GM10248 (cell line): ENCODE measurements at regions of chr16 and their contacts with region 1.

Region 1: DNA sequence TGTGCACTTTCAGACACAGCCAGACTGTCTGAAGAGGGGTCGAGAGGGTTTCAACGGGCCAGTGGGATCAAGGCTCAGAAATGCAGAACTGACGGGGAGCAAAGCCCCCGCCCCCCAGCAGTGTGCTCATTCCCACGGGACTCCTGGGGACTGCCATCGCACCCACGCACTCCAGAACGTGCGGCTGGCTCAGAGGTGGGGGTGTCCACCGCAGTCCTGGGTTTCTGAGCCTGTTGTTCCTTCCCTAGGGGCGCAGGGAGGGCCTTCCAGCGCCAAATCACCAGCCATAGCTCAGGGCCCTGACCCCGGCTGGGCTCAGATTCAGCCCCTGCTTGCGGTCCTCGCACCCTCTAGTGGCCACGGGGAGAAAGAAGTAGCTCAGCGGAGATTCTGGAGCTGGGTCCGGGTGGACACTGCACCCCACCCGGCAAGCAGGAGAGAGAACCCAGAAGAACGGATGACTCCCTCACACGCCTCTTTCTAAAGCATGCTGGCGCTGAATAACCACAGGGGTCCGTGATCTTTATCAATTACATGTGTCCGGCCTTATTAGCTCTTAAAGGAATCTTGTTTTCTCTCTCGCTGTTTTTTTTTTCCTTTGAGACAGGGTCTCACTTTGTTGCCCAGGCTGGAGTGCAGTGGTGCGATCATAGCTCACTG is 45.0 kb upstream of the USP7 start:
- DNase-seq: peak; percentile 90
- CTCF ChIP-seq: peak; percentile 87

Region 2: DNA sequence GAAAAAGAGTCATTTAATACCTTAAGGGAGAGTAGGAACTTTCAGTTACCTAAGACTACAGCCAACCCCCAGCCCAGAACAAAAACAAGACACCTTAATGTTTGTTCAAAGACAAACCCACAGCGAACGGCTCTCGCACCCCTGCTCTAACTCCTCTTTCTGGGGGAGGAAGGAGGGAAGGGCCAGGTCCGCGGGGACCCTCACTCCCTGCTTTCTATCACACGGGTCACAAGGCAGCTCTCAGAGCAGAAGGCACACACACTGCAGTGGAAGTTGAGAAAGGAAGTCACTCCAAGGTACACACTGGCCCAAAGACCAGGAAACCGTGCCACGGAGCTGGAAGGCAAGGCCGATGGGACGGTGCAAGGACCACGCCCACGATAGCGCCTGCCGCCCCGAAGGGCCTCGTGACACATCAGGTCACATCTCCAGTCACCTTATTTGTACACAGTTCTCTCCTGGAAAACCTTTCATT is 116.6 kb before region 1 on chr16:
- CTCF ChIA-PET with region 1: interaction called, 30 read pairs
- POLR2A ChIA-PET with region 1: no interaction called
- DNase-seq: peak; percentile 45
- CTCF ChIP-seq: no peak

Region 3: GRCh38 chr16:8943966-8944759 is 64.6 kb before region 1 on chr16:
- CTCF ChIA-PET with region 1: interaction called, 11 read pairs
- POLR2A ChIA-PET with region 1: no interaction called
- DNase-seq: peak; percentile 71
- CTCF ChIP-seq: no peak

Region 4: GRCh38 chr16:8989099-8989878 is 19.4 kb before region 1 on chr16:
- CTCF ChIA-PET with region 1: interaction called, 43 read pairs
- POLR2A ChIA-PET with region 1: no interaction called
- DNase-seq: no peak
- CTCF ChIP-seq: no peak

Region 5: DNA sequence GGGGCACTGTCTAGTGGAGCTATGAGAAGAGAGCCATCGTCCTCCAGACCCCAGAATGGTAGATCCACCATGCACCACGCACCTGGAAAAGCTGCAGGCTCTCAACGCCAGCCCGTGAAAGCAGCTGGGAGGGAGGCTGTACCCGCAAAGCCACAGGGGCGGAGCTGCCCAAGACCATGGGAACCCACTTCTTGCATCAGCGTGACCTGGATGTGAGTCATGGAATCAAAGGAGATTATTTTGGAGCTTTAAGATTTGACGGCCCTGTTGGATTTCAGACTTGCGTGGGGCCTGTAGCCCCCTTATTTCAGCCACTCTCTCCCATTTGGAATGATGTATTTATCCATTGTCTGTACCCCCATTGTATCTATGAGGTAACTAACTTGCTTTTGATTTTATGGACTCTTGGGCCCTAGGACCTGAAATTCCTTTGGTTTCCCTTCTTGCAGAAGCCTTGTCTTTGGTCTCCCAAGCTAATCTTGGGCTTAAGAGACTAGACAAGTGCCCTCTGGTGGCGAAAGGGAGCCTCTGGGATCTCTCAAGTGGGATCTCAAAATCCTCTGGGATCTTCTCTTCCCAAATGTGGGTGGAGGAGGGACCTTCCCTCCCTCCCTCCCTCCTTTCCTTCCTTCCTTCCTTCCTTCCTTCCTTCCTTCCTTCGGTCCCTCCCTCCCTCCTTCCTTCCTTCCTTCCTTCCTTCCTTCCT is 24.5 kb after region 1 on chr16:
- CTCF ChIA-PET with region 1: interaction called, 18 read pairs
- POLR2A ChIA-PET with region 1: no interaction called
- DNase-seq: peak; percentile 38
- CTCF ChIP-seq: peak; percentile 50